Heart left ventricle (tissue), 16 donors: ENCODE measurements at regions of chr20 and their contacts with region 1.

Region 1: DNA sequence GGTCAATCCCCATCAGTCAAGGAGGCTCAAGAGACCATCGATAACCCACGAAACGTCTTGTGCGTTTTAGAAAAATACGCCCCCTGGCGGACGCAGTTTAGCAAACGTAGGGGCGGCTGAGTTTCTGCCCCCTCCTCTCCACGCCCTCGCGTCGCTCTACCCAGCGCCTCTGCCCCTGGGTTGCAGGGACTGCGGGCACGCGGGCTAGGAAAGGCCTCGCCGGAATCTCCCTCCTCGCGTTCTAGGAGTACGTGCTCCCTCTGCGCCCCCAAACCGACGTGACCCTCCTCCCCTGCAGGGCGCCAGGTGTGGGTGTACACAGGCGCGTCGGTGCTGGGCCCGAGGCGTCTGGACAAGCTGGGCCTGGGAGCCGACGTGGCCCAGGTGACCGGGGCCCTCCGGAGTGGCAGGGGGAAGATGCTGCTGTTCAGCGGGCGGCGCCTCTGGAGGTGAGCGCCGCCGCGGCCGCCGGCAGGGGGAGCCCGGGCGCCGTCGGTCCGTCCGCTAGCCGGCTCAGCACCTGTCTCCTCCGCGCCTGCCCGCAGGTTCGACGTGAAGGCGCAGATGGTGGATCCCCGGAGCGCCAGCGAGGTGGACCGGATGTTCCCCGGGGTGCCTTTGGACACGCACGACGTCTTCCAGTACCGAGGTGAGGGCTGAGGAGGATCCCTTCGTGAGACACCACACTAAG is 5.3 kb downstream of the MMP9 start:
- DNase-seq: peak in 3 of 5 donors; percentile 38 to 74 (median 42)
- ATAC-seq: peak in 3 of 4 donors; percentile 60 to 78 (median 67)
- H3K4me3 ChIP-seq: peak overlapping the region in 2 of 12 donors; percentile 26 to 31
- H3K27ac ChIP-seq: no peak overlapping the region
- H3K4me1 ChIP-seq: peaks cover 0 to 40% (median 0%) of the 10 kb centered on the region in 12 donors
- H3K27me3 ChIP-seq: peaks cover 50 to 97% (median 77%) of the 10 kb centered on the region in 9 donors
- CTCF ChIP-seq: peak; percentile 48 to 74 (median 62)
- POLR2A ChIP-seq: no peak

Region 2: DNA sequence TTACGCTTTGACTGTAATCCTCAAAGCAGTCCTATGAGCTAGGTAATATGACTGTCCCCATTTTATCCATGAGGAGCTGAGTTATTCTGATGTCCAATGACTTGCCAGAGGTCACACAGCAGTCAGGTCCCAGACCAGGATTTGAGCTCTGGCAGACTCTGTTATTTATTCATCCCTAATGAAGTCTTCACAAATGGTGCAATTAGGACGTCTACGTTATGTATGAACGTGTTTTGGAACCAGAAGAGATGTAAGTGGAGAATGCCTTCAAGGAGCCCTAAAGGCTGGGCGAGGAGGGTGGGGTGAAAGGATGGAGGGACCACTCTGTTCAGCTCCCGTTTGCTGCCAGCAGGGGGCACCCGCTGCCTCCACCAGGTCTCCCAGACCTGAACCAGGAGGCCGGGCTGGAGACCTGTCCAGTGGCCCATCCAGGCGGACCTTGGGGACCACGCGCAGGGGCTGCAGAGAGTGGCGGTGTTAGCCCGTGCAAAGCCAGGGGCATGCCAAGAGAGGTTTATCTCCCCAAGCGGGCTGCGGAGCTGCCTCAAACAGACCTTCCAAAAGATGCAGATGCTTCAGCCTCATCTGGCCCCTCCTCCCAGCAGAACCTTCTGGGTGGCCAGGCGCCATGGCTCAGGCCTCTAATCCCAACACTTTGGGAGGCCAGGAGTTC is 26.7 kb before region 1 on chr20:
- intact Hi-C with region 1: loop called in 1 of 10 experiments (anchors 1 kb)
- DNase-seq: peak; percentile 54 to 88 (median 73)
- ATAC-seq: peak in 3 of 4 donors; percentile 83 to 85 (median 84)
- H3K4me3 ChIP-seq: no peak overlapping the region
- H3K27ac ChIP-seq: no peak overlapping the region
- H3K4me1 ChIP-seq: peaks cover 0 to 6% (median 0%) of the 10 kb centered on the region in 12 donors
- H3K27me3 ChIP-seq: peaks cover 0 to 57% (median 4%) of the 10 kb centered on the region in 9 donors
- CTCF ChIP-seq: peak; percentile 52 to 84 (median 74)
- POLR2A ChIP-seq: no peak

Region 3: DNA sequence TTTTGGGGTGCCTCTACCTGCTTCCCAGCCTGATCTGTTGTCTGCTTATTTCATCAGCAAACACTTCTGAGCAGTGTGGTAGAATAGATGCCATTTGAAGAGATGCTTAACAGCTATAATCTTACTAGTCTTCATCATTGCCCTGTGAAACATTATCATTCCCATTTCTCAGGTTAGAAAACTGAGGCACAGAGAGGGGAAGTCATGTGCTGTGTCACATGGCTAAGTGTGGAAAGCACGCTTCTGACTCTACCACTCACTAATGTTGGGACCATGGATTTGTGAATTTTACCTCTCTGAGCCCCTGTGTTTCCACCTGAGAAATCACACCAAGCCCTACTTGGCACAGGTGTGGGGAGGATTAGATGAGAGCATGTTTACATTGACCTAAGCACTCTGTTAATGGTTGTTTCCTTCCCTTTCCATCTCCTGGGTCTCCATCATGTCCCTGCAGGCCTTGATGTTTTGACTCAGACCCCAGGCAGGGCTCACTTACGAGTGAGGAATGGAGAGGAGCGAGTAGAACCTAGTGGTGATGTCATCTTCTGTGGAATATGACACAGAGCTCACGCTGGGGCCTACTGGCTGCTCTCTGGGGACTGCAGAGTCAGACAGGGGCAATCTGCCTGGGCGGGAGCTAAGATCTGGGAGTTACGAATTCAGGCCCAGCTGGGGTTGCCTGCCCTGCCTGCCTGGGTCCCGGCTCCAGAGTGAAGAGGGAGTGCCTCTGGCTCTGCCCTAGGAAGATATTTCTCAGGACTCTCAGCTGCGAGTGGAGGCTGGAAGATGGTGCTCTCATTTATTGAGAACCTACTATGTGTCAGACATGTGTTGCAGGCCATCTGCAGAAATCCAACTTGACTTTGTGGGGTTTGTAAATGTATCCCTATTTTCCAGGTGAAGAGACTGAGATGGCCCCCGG is 230.0 kb after region 1 on chr20:
- intact Hi-C with region 1: no loop called
- DNase-seq: no peak
- ATAC-seq: no peak
- H3K4me3 ChIP-seq: no peak overlapping the region
- H3K27ac ChIP-seq: no peak overlapping the region
- H3K4me1 ChIP-seq: no peaks in the 10 kb centered on the region
- H3K27me3 ChIP-seq: peaks cover 0 to 70% (median 30%) of the 10 kb centered on the region in 9 donors
- CTCF ChIP-seq: no peak
- POLR2A ChIP-seq: no peak

Region 4: GRCh38 chr20:46330072-46330763 is 316.2 kb after region 1 on chr20:
- intact Hi-C with region 1: loop called in 1 of 10 experiments (anchors 10 kb)
- DNase-seq: no peak
- ATAC-seq: peak in 2 of 4 donors; percentile 24 to 28
- H3K4me3 ChIP-seq: no peak overlapping the region
- H3K27ac ChIP-seq: no peak overlapping the region
- H3K4me1 ChIP-seq: peaks cover 0 to 3% (median 0%) of the 10 kb centered on the region in 12 donors
- H3K27me3 ChIP-seq: peaks cover 8 to 86% (median 27%) of the 10 kb centered on the region in 9 donors
- CTCF ChIP-seq: no peak
- POLR2A ChIP-seq: no peak